ENCODE measurements at regions of chr14 and their contacts with region 1.

Region 1: DNA sequence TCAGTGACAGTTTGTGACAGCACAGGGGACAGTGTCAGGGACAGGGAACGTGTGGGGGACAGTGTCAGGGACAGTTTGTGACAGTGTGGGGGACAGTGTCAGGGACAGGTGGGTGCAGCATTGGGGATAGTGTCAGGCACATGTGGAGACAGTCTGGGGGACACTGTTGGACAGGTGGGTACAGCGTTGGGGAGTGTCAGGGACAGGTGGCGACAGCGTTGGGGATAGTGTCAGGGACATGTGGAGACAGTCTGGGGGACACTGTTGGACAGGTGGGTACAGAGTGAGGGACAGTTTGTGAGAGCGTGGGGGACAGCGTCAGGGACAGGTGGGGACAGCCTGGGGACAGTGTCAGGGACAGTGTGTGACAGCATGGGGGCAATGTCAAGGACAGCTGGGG is 140.0 kb downstream of the TMEM121 start:
- DNase-seq: no peak
- CTCF ChIP-seq: no peak

Region 2: DNA sequence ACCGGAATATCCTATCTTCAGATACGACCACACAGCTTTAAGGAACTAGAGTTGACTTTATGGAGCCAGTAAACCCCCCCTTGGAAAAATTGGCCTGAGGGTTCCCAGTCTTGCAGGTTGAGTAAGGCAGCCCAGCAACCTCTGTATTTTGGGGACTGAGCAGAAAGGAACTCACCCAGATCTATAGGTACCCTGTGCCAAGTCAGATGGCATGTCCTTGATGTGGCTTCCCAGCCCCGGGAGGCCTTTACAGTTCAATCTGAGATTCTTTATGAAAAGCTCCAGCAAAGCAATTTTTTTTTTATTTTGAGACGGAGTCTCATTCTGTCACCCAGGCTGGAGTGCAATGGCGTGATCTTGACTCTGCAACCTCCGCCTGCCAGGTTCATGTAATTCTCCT is 112.4 kb before region 1 on chr14:
- in situ Hi-C with region 1: loop called (anchors 5 kb)
- DNase-seq: no peak
- CTCF ChIP-seq: no peak

Region 3: DNA sequence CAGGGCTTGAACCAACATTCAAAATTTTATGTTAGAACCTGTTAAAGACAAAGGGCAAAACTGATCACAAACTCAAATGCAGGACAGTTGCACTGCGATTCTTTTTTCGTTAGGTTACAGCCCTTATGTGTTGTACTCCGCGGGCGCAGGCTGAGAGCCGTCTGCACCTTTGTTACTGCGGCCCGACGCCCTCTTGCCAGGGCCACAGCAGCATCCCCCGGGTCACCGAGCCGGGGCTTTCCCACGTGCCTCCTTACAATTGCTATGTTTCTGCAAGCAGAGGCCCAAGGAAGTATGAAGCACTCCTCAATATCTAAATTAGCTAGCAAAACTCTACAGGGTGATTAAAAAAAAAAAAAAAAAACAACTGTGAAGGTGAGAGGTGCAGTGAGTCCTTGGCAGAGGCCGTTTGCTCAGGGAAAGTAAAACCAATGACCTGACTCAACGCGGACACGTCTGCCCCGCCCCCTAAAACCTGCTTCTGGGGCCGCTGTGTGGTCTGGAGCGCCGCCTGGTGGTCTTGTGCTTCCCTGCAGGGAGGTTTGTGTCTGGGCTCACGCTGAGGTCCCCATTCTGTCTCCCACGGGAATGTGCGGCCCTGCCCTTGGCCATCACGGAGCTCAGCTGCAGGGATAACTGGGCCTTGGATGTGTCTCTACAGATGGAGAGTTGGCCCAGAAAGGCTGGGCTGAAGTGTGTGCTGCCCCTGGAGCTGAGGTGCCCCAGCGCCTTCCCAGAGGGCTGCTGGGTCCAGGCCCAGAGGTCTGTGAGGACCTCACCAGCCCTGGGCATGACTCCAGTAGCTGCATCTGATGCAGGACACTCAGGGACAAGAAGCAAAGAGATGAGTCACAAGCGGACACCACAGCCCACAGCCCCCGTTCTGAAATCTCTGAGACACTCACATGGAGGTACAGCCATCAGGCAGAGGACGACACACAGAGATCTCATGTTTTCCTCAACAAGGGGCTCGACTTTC is 278.5 kb after region 1 on chr14:
- in situ Hi-C with region 1: loop called (anchors 10 kb)
- DNase-seq: peak; percentile 76
- CTCF ChIP-seq: peak; percentile 74

Region 4: DNA sequence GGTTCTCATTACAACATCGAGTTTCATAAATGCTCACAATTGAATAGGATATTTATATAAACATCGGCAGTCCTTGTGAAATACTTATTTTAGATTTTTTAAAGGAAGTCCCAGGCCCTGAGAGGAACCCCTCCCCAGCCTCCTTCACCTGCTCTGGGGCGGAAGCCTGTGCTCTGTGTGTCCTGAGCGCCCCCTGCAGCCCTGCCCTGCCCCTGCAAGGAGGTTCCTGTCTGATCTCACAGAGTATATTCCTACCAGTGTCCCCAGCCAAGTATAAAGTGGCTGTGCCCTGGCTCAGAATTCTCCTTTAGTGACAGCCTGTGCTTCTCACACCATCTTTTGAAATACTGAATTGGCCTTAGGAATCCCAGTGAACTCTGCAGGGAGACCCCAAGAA is 519.4 kb after region 1 on chr14:
- in situ Hi-C with region 1: no loop called
- DNase-seq: no peak
- CTCF ChIP-seq: peak; percentile 32